Left lung (tissue), 14 donors: ENCODE measurements at regions of chr1 and their contacts with region 1.

Region 1: DNA sequence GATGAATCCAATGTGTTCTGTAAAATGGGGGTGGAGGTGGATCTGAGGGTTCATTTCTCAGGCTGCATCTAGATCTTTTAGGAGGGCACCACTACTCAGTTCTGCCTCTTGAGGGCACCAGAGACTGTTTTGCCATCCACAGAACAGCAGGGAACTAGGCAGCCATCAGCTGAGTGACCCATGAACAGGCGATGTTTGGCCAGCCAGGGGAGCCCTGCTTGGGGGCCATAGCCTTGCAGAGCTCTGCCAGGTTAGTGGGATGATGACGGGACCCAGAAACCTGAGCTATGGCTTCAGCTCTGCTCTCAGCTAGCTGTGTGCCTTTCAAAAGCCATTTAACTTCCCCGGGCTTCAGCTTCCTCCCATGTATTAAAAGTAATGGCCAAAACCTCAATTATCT is 13.4 kb upstream of the NOS1AP start:
- DNase-seq: peak; percentile 50 to 72 (median 66)
- ATAC-seq: peak; percentile 99
- H3K4me3 ChIP-seq: no peak overlapping the region
- H3K27ac ChIP-seq: no peak overlapping the region
- H3K4me1 ChIP-seq: no peaks in the 10 kb centered on the region
- H3K27me3 ChIP-seq: no peaks in the 10 kb centered on the region
- CTCF ChIP-seq: peak; percentile 78 to 91

Region 2: GRCh38 chr1:162040681-162041080 is 15.4 kb before region 1 on chr1:
- intact Hi-C with region 1: no loop called
- DNase-seq: no peak
- ATAC-seq: peak; percentile 28
- H3K4me3 ChIP-seq: no peak overlapping the region
- H3K27ac ChIP-seq: no peak overlapping the region
- H3K4me1 ChIP-seq: no peaks in the 10 kb centered on the region
- H3K27me3 ChIP-seq: no peaks in the 10 kb centered on the region
- CTCF ChIP-seq: peak in 1 of 2 donors; percentile 30

Region 3: GRCh38 chr1:162276493-162276892 is 220.4 kb after region 1 on chr1:
- intact Hi-C with region 1: loop called in 1 of 2 experiments (anchors 2 kb)
- DNase-seq: peak in 1 of 4 donors; percentile 34
- ATAC-seq: peak; percentile 81
- H3K4me3 ChIP-seq: no peak overlapping the region
- H3K27ac ChIP-seq: no peak overlapping the region
- H3K4me1 ChIP-seq: no peaks in the 10 kb centered on the region
- H3K27me3 ChIP-seq: no peaks in the 10 kb centered on the region
- CTCF ChIP-seq: no peak

Region 4: GRCh38 chr1:162391790-162392563 is 335.9 kb after region 1 on chr1:
- intact Hi-C with region 1: loop called in 1 of 2 experiments (anchors 5 kb)
- DNase-seq: peak in 2 of 4 donors; percentile 30 to 40
- ATAC-seq: peak; percentile 95
- H3K4me3 ChIP-seq: no peak overlapping the region
- H3K27ac ChIP-seq: peak overlapping the region in 1 of 2 donors; percentile 44
- H3K4me1 ChIP-seq: peaks cover 0 to 5% of the 10 kb centered on the region in 2 donors
- H3K27me3 ChIP-seq: peaks cover 0 to 5% of the 10 kb centered on the region in 2 donors
- CTCF ChIP-seq: peak; percentile 69 to 72